Activated B cell treated with CpG ODN at 0.5 μM for 24 hours (primary cell): ENCODE measurements at regions of chr20 and their contacts with region 1.

Region 1: GRCh38 chr20:37365760-37366638 is 20.1 kb downstream of the SRC start:
- DNase-seq: no peak
- ATAC-seq: peak; percentile 88
- H3K4me3 Mint-ChIP-seq: peak overlapping the region; percentile 49
- H3K27ac Mint-ChIP-seq: peak overlapping the region; percentile 80
- H3K4me1 Mint-ChIP-seq: peaks cover 45% of the 10 kb centered on the region
- H3K27me3 Mint-ChIP-seq: no peaks in the 10 kb centered on the region
- CTCF ChIP-seq: no peak

Region 2: DNA sequence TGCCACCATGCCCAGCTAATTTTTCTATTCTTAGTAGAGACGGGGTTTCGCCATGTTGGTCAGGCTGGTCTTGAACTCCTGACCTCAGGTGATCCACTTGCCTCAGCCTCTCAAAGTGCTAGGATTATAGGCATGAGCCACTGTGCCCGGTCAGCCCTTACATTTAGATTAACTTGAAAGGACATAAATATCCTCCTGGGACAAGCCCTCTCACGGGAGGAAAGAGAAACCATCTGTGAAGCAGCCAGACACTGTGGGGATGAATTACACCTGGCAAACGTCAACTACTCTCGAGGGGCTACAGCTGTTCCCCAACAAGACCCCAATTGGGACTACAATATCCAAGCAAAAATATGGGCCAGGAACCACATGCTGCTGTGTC is 381.8 kb before region 1 on chr20:
- CTCF ChIA-PET with region 1: no interaction called
- POLR2A ChIA-PET with region 1: no interaction called
- intact Hi-C with region 1: no loop called
- DNase-seq: no peak
- ATAC-seq: peak; percentile 40
- H3K4me3 Mint-ChIP-seq: no peak overlapping the region
- H3K27ac Mint-ChIP-seq: no peak overlapping the region
- H3K4me1 Mint-ChIP-seq: peaks cover 19% of the 10 kb centered on the region
- H3K27me3 Mint-ChIP-seq: no peaks in the 10 kb centered on the region
- CTCF ChIP-seq: no peak

Region 3: DNA sequence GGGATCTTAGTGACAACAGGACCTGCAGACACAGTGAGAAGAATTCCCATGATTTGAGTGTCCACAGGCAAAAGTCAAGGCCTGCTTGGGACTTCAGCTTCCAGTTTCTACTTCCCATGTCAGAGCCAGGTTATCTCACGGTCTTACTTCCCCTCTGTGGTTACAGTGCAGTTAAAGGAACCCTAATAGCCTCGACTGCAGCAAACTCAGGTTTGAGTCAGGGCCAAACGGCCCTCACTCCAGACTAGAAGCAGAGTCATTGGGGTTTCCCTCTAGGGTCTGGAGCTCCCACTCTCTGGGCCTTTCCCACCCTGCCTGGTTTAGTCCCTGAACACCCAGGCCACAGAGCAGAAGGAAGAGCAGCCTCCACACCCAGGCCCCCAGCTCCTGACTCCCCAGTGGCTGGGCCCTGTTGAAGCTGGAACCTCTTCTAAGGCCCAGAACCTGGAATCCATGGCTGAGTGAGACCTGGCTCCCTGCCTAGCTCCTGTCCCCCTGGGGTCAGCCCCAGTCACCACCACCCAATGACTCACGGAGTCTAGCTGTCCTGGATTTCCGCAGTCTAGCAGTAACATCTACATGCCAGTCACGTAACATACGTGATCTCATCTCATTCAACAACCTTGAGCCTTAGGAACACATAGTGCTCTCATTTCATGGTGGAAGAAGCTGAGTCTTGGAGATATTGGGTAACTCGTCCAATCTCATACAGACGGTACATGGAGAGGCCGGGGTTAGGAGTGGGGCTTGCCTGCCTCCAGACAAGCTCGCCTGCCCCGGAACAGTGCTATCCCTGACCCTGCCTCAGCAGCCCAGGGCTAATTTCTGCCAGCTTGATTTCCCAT is 95.2 kb before region 1 on chr20:
- CTCF ChIA-PET with region 1: interaction called, 18 read pairs
- POLR2A ChIA-PET with region 1: interaction called, 11 read pairs
- intact Hi-C with region 1: no loop called
- DNase-seq: peak; percentile 20
- ATAC-seq: peak; percentile 74
- H3K4me3 Mint-ChIP-seq: peak overlapping the region; percentile 11
- H3K27ac Mint-ChIP-seq: peak overlapping the region; percentile 72
- H3K4me1 Mint-ChIP-seq: peaks cover 52% of the 10 kb centered on the region
- H3K27me3 Mint-ChIP-seq: no peaks in the 10 kb centered on the region
- CTCF ChIP-seq: no peak

Region 4: GRCh38 chr20:37316116-37316774 is 49.8 kb before region 1 on chr20:
- CTCF ChIA-PET with region 1: no interaction called
- POLR2A ChIA-PET with region 1: no interaction called
- intact Hi-C with region 1: loop called (anchors 1 kb)
- DNase-seq: peak; percentile 62
- ATAC-seq: peak; percentile 90
- H3K4me3 Mint-ChIP-seq: peak overlapping the region; percentile 59
- H3K27ac Mint-ChIP-seq: peak overlapping the region; percentile 92
- H3K4me1 Mint-ChIP-seq: peaks cover 56% of the 10 kb centered on the region
- H3K27me3 Mint-ChIP-seq: no peaks in the 10 kb centered on the region
- CTCF ChIP-seq: no peak

Region 5: DNA sequence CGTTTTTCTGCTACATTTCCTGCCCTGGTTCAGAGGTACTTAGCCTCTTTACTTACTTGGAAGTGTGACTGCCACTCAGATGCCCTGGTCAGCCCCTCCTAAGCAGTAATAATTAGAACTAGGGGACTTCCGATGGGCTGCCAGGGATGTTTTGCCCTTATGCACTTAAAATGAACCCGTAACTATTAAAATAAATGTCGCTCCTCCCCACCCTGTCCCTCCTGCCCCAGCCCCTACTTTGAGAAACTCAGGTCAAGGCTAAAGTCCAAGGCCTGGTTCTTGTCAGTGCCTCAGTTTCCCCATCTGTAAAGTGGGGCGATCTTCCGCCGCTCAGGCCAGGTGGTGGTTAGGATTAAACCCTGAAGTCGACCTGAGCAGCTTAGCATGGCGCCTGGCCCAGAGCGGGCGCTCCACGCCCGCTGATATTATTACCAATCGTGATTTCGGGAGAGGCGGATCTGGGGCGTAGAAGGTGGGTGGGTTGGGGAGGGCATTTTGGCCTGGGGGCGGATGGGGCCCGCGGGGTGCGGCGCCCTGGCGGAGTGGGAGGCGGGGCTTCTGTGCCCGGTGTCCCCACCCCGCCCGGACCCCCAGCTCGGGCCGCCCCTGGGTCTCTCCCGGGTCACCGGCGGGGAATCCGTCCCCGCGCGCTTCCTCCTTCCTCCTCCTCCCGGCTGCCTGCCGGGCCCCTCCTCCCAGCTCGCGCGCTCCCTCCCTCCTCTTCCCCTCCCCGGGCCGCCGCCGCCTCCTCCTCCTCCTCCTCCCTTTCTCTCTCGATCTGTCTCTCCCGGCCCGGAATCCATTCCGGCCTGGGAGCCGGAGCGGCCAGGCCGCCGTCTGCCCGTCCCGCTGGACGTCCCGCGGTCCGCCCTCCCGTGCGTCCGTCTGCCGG is 20.4 kb before region 1 on chr20 and contains the start of gene SRC:
- CTCF ChIA-PET with region 1: no interaction called
- POLR2A ChIA-PET with region 1: interaction called, 6 read pairs
- intact Hi-C with region 1: loop called (anchors 2 kb)
- DNase-seq: peak; percentile 56
- ATAC-seq: peak; percentile 65
- H3K4me3 Mint-ChIP-seq: peak within 1 kb of the TSS; percentile 84
- H3K27ac Mint-ChIP-seq: peak within 1 kb of the TSS; percentile 80
- H3K4me1 Mint-ChIP-seq: peaks cover 54% of the 10 kb centered on the region
- H3K27me3 Mint-ChIP-seq: no peaks in the 10 kb centered on the region
- CTCF ChIP-seq: no peak
- total RNA-seq, gene SRC: 62.9 and 72.7 TPM in 2 replicates

Region 6: DNA sequence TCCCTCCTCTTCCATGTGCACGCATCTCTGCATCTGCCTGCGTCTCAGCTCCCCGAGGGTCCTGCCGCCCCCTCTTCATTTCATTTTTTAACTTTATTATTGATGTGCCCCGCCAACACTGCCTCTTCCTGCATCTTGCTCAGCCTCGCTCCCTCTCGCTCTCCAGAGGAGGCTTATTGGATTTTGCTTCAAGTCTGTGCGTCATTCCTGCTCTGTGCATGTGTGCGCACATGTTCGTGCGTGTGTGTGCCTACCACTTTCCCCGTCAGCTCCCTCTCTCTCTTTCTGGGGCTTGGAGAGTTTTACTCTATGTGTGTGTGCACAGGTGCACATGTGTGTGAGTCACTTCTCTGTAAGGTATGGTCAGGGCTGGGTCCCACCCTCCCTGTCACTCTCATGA is 83.3 kb after region 1 on chr20:
- CTCF ChIA-PET with region 1: no interaction called
- POLR2A ChIA-PET with region 1: no interaction called
- intact Hi-C with region 1: no loop called
- DNase-seq: no peak
- ATAC-seq: no peak
- H3K4me3 Mint-ChIP-seq: no peak overlapping the region
- H3K27ac Mint-ChIP-seq: no peak overlapping the region
- H3K4me1 Mint-ChIP-seq: no peaks in the 10 kb centered on the region
- H3K27me3 Mint-ChIP-seq: peaks cover 9% of the 10 kb centered on the region
- CTCF ChIP-seq: no peak

Region 7: DNA sequence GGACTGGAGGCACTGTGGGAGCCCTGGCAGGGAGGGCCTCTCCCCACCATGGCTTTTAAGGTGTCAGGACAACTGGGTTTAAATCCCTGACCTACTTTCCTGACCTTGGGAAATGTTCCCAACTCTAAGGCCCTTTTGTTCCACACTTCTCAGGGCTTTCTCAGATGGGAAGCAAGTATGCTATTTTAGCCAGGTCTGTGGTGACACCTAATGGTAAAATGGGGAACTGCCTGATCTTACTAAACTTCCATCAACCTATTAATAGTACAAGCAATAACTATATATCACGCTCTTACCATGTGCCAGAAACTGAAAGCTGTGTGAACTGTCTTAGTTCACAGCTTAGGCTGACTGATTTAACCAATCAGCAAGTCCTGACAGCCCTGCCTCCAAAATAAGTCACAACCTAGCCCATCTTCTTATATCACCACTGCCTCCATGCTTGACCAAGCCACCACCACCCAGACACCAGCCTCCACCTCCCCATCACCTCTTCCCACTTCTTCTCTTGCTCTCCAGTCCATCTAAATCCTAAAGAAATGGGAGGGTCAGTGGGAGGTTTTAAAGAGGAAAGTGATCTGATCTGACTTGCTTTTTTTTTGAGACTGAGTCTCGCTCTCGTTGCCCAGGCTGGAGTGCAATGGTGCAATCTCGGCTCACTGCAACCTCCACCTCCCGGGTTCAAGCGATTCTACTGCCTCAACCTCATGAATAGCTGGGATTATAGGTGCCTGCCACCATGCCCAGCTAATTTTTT is 168.6 kb after region 1 on chr20:
- CTCF ChIA-PET with region 1: interaction called, 3 read pairs
- POLR2A ChIA-PET with region 1: no interaction called
- intact Hi-C with region 1: loop called (anchors 1 kb)
- DNase-seq: no peak
- ATAC-seq: peak; percentile 99
- H3K4me3 Mint-ChIP-seq: no peak overlapping the region
- H3K27ac Mint-ChIP-seq: peak overlapping the region; percentile 38
- H3K4me1 Mint-ChIP-seq: peaks cover 9% of the 10 kb centered on the region
- H3K27me3 Mint-ChIP-seq: peaks cover 10% of the 10 kb centered on the region
- CTCF ChIP-seq: peak; percentile 38